HepG2 (cell line): ENCODE measurements at regions of chr3 and their contacts with region 1.

Region 1: DNA sequence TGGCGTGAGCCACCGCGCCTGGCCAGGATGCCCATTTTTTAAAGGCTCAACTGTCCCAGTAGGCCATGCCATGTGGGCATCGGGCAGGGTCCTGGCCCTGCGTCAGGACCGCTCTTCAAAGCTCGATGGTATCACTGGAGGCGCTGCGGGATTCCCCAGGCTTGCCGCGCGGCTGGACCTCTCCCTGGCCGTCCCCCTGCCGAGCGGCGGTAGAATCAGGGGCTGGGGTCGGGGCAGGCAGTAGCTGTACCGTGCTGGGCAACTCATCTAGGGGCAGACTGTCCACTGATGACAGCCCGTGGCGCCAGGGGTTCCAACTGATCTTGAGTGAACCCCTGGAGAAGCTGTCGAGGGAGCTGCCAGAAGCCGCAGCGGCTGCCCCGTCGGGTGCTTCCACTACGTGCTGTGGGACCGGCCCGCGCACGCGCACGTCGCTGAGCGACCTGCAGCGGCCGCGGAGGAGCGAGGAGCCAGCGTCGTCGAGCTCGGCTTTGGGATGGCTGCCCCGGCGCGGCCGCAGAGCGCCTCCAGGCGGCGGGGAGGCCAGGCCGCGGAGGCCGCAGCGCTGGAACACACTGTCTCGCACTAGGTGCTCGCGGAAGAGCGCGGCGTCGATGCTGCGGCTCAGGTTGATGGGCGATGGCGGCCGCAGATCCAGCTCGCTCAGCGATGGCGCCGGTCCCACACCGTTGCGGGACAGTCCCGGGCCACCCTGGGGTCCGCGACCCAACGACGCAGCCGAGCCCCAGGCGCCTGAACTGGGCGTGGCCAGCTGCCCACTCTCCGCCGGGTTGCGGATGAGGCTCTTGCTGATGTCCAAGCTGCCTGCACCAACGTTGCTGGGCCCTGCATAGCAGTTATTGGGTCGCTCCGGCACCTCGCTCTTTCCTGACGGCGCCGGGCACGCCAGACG is 5.8 kb downstream of the PRRT3 start:
- DNase-seq: peak; percentile 74
- ATAC-seq: peak; percentile 87
- H3K4me3 ChIP-seq: peak overlapping the region; percentile 51 to 85 (median 77)
- H3K27ac ChIP-seq: peak overlapping the region; percentile 70
- H3K4me1 ChIP-seq: peaks cover 27% of the 10 kb centered on the region
- H3K27me3 ChIP-seq: no peaks in the 10 kb centered on the region
- CTCF ChIP-seq: peak; percentile 88
- EP300 ChIP-seq: peak; percentile 23 to 31; a peak in 2 of 4 replicates
- POLR2A ChIP-seq: peak in 1 of 2 experiments; percentile 45; a peak in 1 of 4 replicates
- RAD21 ChIP-seq: peak; percentile 96

Region 2: GRCh38 chr3:9749645-9750555 is 196.5 kb before region 1 on chr3 and contains the start of gene OGG1:
- CTCF ChIA-PET with region 1: no interaction called
- POLR2A ChIA-PET with region 1: interaction called, 11 read pairs
- in situ Hi-C with region 1: no loop called
- intact Hi-C with region 1: no loop called
- DNase-seq: peak; percentile 96
- ATAC-seq: peak; percentile 95
- H3K4me3 ChIP-seq: peak within 1 kb of the TSS; percentile 83 to 93 (median 89)
- H3K27ac ChIP-seq: peak within 1 kb of the TSS; percentile 72
- H3K4me1 ChIP-seq: peaks cover 19% of the 10 kb centered on the region
- H3K27me3 ChIP-seq: no peaks in the 10 kb centered on the region
- CTCF ChIP-seq: peak; percentile 33
- EP300 ChIP-seq: peak in 1 of 2 experiments; percentile 6; a peak in 2 of 4 replicates
- POLR2A ChIP-seq: peak; percentile 62 to 73
- RAD21 ChIP-seq: no peak
- total RNA-seq, gene OGG1: 23.8 and 28.7 TPM in 2 replicates

Region 3: GRCh38 chr3:9862391-9863057 is 83.8 kb before region 1 on chr3:
- CTCF ChIA-PET with region 1: interaction called, 10 read pairs
- POLR2A ChIA-PET with region 1: interaction called, 28 read pairs
- in situ Hi-C with region 1: no loop called
- intact Hi-C with region 1: loop called (anchors 1 kb)
- DNase-seq: peak; percentile 74
- ATAC-seq: peak; percentile 93
- H3K4me3 ChIP-seq: peak overlapping the region; percentile 43 to 77 (median 72); a peak in 5 of 6 replicates
- H3K27ac ChIP-seq: peak overlapping the region; percentile 22
- H3K4me1 ChIP-seq: peaks cover 45% of the 10 kb centered on the region
- H3K27me3 ChIP-seq: peaks cover 0 to 12% of the 10 kb centered on the region in 2 experiments; a peak in 2 of 5 replicates
- CTCF ChIP-seq: peak; percentile 90
- EP300 ChIP-seq: no peak
- POLR2A ChIP-seq: peak in 1 of 2 experiments; percentile 80; a peak in 3 of 4 replicates
- RAD21 ChIP-seq: peak; percentile 98

Region 4: DNA sequence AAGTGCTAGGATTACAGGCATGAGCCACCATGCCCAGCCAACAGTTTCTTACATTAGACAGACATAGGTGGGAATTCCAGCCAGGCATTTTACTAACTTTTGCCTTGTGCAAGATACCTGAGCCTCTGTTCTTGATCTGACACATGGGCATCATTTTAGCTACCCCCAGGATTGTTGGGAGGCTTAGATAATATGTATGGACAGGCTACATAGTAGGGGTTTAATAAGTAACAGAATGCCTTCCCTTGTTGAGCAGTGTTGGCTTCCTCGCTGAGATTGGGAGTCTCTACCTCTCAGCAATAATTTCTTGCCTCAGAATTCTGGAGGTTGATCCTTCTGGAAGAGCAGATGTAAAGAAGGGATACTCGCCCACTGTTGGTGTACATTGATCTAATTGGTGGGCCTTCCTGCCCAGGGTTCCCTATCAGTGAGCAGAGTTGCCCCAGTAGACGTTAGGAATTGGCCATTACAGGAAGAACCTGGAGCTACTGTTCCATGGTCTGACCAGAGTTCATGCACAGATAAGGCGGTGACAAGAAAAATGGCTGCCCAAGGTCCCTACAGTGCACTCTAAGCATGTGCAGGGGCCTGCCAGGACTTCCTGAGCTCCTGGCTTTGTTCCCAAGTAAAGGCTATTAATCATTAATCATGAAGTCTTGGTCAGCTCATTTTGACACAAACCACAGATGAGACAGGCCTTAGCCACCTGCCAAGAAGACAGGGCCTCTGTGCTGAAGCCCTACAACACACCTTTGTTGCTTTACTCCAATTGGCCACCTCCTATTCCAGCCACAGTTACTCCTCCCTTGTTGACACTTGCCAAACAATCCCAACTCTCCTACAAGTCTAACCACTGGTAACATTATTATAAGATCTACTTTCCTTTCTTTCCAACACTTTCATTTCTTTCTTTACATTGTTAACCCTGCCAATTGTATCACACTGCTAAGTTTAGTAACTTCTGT is 48.7 kb before region 1 on chr3:
- CTCF ChIA-PET with region 1: interaction called, 3 read pairs
- POLR2A ChIA-PET with region 1: interaction called, 33 read pairs
- in situ Hi-C with region 1: no loop called
- intact Hi-C with region 1: loop called (anchors 5 kb)
- DNase-seq: peak; percentile 98
- ATAC-seq: peak; percentile 80
- H3K4me3 ChIP-seq: peak overlapping the region in 2 of 3 experiments; percentile 34 to 67; a peak in 3 of 6 replicates
- H3K27ac ChIP-seq: peak overlapping the region; percentile 100
- H3K4me1 ChIP-seq: peaks cover 79% of the 10 kb centered on the region
- H3K27me3 ChIP-seq: no peaks in the 10 kb centered on the region; a peak in 1 of 5 replicates
- CTCF ChIP-seq: no peak
- EP300 ChIP-seq: peak in 1 of 2 experiments; percentile 48; a peak in 3 of 4 replicates
- POLR2A ChIP-seq: peak; percentile 66 to 88
- RAD21 ChIP-seq: no peak

Region 5: DNA sequence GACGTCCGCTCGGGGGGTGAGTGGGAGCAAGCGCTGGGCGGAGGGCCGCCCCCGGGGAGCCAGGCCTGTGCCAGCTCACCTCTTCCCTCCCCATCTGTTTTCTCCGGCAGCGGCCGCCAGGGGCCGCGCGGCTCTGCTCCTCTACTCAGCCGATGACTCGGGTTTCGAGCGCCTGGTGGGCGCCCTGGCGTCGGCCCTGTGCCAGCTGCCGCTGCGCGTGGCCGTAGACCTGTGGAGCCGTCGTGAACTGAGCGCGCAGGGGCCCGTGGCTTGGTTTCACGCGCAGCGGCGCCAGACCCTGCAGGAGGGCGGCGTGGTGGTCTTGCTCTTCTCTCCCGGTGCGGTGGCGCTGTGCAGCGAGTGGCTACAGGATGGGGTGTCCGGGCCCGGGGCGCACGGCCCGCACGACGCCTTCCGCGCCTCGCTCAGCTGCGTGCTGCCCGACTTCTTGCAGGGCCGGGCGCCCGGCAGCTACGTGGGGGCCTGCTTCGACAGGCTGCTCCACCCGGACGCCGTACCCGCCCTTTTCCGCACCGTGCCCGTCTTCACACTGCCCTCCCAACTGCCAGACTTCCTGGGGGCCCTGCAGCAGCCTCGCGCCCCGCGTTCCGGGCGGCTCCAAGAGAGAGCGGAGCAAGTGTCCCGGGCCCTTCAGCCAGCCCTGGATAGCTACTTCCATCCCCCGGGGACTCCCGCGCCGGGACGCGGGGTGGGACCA is 13.4 kb before region 1 on chr3:
- CTCF ChIA-PET with region 1: interaction called, 14 read pairs
- POLR2A ChIA-PET with region 1: interaction called, 124 read pairs
- in situ Hi-C with region 1: no loop called
- intact Hi-C with region 1: loop called (anchors 2 kb)
- DNase-seq: peak; percentile 70
- ATAC-seq: peak; percentile 88
- H3K4me3 ChIP-seq: peak overlapping the region; percentile 64 to 82 (median 80); a peak in 5 of 6 replicates
- H3K27ac ChIP-seq: peak overlapping the region; percentile 92
- H3K4me1 ChIP-seq: peaks cover 40% of the 10 kb centered on the region
- H3K27me3 ChIP-seq: no peaks in the 10 kb centered on the region
- CTCF ChIP-seq: peak; percentile 90
- EP300 ChIP-seq: no peak
- POLR2A ChIP-seq: 0 out of 4 replicates have a peak, but pooled peaks of 1 of the 2 experiments have one; percentile 59
- RAD21 ChIP-seq: peak; percentile 84

Region 6: GRCh38 chr3:10026084-10026890 is 79.9 kb after region 1 on chr3 and contains the start of gene FANCD2:
- CTCF ChIA-PET with region 1: interaction called, 3 read pairs
- POLR2A ChIA-PET with region 1: interaction called, 13 read pairs
- in situ Hi-C with region 1: no loop called
- intact Hi-C with region 1: no loop called
- DNase-seq: peak; percentile 72
- ATAC-seq: peak; percentile 97
- H3K4me3 ChIP-seq: peak within 1 kb of the TSS; percentile 80 to 92 (median 90)
- H3K27ac ChIP-seq: peak within 1 kb of the TSS; percentile 68
- H3K4me1 ChIP-seq: peaks cover 18% of the 10 kb centered on the region
- H3K27me3 ChIP-seq: no peaks in the 10 kb centered on the region
- CTCF ChIP-seq: no peak; the same call in 1 of the 2 replicates
- EP300 ChIP-seq: no peak
- POLR2A ChIP-seq: peak; percentile 75 to 86
- RAD21 ChIP-seq: peak; percentile 55; the same call in 1 of the 2 replicates
- total RNA-seq, gene FANCD2: 42.0 and 51.9 TPM in 2 replicates

Region 7: DNA sequence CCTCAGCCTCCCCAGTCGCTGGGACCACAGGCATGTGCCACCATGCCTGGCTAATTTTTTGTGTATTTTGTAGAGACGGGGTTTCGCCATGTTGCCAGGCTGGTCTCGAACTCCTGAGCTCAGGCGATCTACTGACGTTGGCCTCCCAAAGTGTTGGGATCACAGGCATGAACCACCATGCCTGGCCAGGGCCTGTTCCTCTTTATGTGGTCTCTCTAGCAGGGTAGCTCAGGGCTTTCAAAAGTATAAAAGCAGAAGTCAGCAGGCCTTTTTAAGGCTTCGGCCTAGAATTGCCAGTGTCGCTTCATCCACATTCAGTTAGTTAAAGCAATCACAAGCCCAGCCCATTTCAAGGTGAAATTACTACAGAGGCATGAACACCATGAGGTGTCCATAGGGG is 202.9 kb after region 1 on chr3:
- CTCF ChIA-PET with region 1: no interaction called
- POLR2A ChIA-PET with region 1: no interaction called
- in situ Hi-C with region 1: no loop called
- intact Hi-C with region 1: no loop called
- DNase-seq: no peak
- ATAC-seq: no peak
- H3K4me3 ChIP-seq: no peak overlapping the region
- H3K27ac ChIP-seq: no peak overlapping the region
- H3K4me1 ChIP-seq: peaks cover 22% of the 10 kb centered on the region
- H3K27me3 ChIP-seq: no peaks in the 10 kb centered on the region
- CTCF ChIP-seq: no peak
- EP300 ChIP-seq: no peak
- POLR2A ChIP-seq: no peak
- RAD21 ChIP-seq: no peak